ENCODE measurements at regions of chr15 and their contacts with region 1.

Region 1: DNA sequence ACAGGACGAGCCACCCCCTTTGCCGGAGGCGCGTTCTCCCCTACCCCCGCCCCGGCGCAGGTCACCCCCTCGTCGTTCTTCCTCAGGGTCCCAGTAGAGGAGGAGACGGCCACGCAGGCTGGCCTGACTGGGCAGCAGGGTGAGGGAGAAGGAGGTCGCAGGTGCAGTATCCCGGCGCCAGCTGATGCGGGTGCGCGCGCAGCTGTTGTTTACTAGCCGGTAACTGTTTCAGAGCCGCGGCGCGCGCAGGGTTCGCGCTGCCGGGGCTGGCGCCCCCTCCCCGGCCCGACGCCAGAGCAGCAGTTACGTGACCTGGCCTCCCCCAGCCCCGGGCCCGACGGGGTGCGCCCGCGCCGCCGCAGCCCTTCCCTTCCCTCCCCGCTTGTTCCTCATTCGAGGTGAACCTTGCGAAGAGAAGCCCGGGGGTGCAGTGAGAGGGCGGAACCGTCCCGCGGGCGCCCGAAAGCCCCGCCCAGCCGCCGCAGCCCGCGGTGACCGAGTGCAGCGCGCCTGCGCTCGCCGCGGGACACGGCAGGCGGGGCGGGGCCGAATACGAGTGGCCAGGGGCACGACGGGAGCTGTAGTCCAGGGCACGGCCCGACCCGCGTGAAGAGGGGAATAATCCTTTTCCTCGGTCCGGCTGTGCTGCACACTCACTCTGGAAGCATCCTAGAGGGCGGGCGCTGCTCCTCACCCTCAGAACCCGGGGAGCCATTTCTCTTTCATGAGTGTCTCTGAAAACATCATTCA is at the start of gene SLC12A6:
- DNase-seq: peak; percentile 92 to 96 (median 93)
- ATAC-seq: peak; percentile 93 to 98 (median 96)
- H3K4me3 ChIP-seq: peak within 1 kb of the TSS; percentile 70 to 95 (median 88)
- H3K27ac ChIP-seq: peak within 1 kb of the TSS; percentile 67 to 97 (median 94)
- H3K4me1 ChIP-seq: peaks cover 0 to 74% (median 46%) of the 10 kb centered on the region in 12 donors
- H3K27me3 ChIP-seq: no peaks in the 10 kb centered on the region
- CTCF ChIP-seq: no peak
- POLR2A ChIP-seq: peak in 1 of 2 donors; percentile 95
- total RNA-seq, gene SLC12A6: 17.3 to 35.1 (median 24.9) TPM

Region 2: DNA sequence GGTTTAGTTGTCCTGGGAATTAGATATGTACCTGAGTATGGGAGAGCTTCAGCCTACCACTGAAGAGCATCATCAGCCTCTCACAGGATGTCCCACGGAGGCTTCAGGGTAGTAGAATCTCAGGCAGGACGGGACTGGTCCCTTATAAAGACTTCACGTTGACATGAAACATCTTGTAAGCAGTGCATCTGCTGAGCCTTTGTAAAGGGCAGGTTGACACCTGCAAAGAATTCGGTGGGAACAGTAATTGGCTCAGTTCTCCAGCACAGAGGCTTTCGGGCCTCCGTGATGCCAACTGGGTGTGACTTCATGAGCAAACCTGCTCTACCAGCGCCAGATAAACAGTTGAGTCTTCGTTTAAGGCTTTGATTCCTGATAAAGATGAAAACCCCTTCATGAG is 271.8 kb before region 1 on chr15:
- intact Hi-C with region 1: loop called in 1 of 10 experiments (anchors 10 kb)
- DNase-seq: no peak
- ATAC-seq: no peak
- H3K4me3 ChIP-seq: no peak overlapping the region
- H3K27ac ChIP-seq: no peak overlapping the region
- H3K4me1 ChIP-seq: peaks cover 0 to 5% (median 0%) of the 10 kb centered on the region in 12 donors
- H3K27me3 ChIP-seq: no peaks in the 10 kb centered on the region
- CTCF ChIP-seq: no peak
- POLR2A ChIP-seq: no peak

Region 3: DNA sequence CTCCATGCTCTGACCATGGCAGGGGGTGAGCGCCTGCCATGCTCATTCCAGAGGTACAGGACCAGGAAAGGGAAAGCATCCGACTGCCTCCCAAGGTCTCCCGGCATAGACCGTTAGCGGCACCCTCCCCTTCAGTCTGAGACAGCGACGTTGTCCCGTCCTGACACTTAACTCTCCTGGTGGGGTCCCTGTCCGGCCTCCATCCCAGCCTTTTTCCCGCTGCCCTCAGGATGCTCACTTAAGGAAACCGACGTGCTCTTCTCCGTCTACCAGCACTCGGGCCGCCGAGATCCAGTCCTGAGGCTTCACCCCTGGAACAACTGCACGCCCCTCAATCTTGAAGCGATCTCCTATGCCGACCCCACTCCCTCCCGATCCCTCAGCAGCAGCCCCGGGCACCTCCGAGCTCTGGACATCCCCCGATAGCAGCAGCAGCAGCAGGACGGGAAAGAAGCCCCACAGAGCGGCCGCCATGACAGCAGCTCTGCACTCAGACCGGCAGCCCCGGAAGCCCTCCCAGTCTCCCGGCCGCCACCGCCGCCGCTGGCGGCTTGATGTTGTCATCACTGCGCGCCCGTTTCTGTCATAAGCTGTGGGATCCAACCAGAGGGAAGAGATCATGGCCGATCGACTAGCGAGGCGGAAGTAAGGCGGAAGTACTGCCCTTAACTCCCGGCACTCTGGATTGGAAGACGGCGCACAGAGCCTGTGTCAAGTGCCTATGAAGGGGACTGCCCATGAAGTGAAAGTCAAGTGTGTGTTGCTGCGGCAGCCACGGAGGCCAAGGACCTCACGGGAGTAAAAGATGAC is 236.2 kb before region 1 on chr15 and contains the starts of genes EMC7 and PGBD4:
- intact Hi-C with region 1: loop called in 1 of 10 experiments (anchors 10 kb)
- DNase-seq: peak; percentile 99
- ATAC-seq: peak; percentile 100
- H3K4me3 ChIP-seq: peak within 1 kb of the TSS; percentile 72 to 95 (median 86)
- H3K27ac ChIP-seq: peak within 1 kb of the TSS; percentile 4 to 95 (median 88)
- H3K4me1 ChIP-seq: peaks cover 6 to 34% (median 22%) of the 10 kb centered on the region in 12 donors
- H3K27me3 ChIP-seq: no peaks in the 10 kb centered on the region
- CTCF ChIP-seq: no peak
- POLR2A ChIP-seq: peak in 1 of 2 donors; percentile 77
- total RNA-seq, gene EMC7: 28.9 to 95.2 (median 59.1) TPM
- total RNA-seq, gene PGBD4: 0.95 to 2.1 (median 1.7) TPM

Region 4: GRCh38 chr15:34223904-34224596 is 113.7 kb before region 1 on chr15:
- intact Hi-C with region 1: loop called in 2 of 10 experiments (anchors 5 kb)
- DNase-seq: no peak
- ATAC-seq: peak in 3 of 4 donors; percentile 28 to 38 (median 29)
- H3K4me3 ChIP-seq: peak overlapping the region; percentile 71 to 97 (median 84)
- H3K27ac ChIP-seq: peak overlapping the region; percentile 43 to 99 (median 91)
- H3K4me1 ChIP-seq: peaks cover 0 to 23% (median 16%) of the 10 kb centered on the region in 12 donors
- H3K27me3 ChIP-seq: no peaks in the 10 kb centered on the region
- CTCF ChIP-seq: no peak
- POLR2A ChIP-seq: no peak

Region 5: DNA sequence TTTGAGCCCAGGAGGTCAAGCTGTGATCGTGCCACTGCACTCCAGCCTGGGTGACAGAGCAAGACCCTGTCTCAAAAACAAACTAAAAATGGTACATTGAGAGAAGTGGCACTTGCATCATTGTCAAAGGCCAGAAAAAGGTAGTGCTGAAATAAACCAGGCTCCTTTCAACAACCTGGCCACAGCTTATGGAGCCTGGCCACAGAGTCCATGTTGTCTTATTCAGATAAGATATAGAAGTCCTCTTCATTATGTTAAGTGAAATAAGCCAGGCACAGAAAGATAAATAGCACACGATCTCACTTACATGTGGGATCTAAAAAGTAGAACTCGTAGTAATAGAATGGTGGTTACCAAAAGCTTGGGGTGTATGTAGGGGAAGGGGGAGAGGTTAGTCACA is 78.2 kb before region 1 on chr15:
- intact Hi-C with region 1: loop called in 5 of 10 experiments (anchors 5 to 10 kb)
- DNase-seq: peak in 4 of 5 donors; percentile 42 to 60 (median 50)
- ATAC-seq: peak; percentile 89 to 92 (median 90)
- H3K4me3 ChIP-seq: no peak overlapping the region
- H3K27ac ChIP-seq: peak overlapping the region; percentile 2 to 82 (median 60)
- H3K4me1 ChIP-seq: peaks cover 0 to 23% (median 2%) of the 10 kb centered on the region in 12 donors
- H3K27me3 ChIP-seq: no peaks in the 10 kb centered on the region
- CTCF ChIP-seq: no peak
- POLR2A ChIP-seq: no peak

Region 6: DNA sequence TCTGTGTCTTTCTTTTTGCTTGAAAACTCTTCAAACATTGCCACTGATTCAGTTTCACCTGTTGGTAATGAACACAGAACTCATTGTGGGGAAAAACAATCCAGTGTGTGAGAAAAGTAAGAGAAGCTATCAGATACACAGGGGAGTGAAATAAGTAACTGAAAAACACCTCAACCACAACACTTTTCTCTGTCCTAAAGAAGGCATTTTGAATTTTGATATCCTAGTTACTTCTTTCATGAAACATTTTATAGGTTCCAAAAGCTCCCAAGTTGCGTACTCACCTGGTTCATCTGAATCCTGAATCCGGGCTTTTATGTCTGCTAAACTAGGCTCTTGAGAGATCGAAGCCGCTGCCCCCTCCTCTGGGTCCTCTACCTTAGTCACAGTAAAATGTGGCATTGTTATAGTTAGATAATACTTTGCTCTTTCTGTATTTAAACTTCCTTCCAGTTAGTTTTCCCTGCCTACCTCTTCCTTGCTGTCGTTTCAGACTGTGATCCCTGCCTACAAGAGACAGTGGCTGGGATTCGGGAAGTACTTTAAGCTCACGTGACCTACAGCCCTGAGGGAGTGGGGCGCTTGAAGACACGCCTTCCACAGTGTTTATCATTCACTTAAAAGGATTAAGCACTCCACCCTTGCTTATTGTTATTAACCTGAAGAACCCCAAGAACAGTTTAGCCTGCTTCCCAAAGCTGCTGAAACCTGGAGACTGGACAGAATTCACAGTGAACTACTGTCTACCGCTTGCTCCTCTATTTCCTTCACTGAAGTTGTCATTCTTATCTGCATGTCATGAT is 19.3 kb before region 1 on chr15:
- intact Hi-C with region 1: loop called in 1 of 10 experiments (anchors 1 kb)
- DNase-seq: peak in 4 of 5 donors; percentile 55 to 75 (median 67)
- ATAC-seq: peak; percentile 92 to 98 (median 98)
- H3K4me3 ChIP-seq: peak overlapping the region; percentile 12 to 65 (median 62)
- H3K27ac ChIP-seq: peak overlapping the region; percentile 2 to 79 (median 52)
- H3K4me1 ChIP-seq: peaks cover 0 to 30% (median 14%) of the 10 kb centered on the region in 12 donors
- H3K27me3 ChIP-seq: no peaks in the 10 kb centered on the region
- CTCF ChIP-seq: no peak
- POLR2A ChIP-seq: peak in 1 of 2 donors; percentile 49

Region 7: DNA sequence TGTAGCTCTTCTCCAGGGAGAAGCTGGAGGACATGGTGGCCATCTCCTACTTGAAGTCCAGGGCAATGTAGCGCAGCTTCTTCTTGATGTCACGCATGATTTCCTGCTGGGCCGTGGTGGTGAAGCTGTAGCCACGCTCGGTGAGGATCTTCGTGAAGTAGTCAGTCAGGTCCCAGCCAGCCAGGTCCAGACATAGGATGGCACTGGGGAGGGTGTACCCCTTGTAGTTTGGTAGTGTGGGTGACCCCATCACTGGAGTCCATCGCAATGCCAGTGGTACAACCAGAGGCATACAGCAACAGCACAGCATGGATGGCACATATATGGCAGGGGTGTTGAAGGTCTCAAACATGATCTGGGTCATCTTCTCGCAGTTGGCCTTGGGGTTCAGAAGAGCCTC is 36.2 kb after region 1 on chr15:
- intact Hi-C with region 1: no loop called
- DNase-seq: no peak
- ATAC-seq: peak in 1 of 4 donors; percentile 27
- H3K4me3 ChIP-seq: no peak overlapping the region
- H3K27ac ChIP-seq: no peak overlapping the region
- H3K4me1 ChIP-seq: no peaks in the 10 kb centered on the region
- H3K27me3 ChIP-seq: no peaks in the 10 kb centered on the region
- CTCF ChIP-seq: no peak
- POLR2A ChIP-seq: no peak

Measured in heart left ventricle (tissue), 16 donors.